Endothelial cell of umbilical vein (primary cell): ENCODE measurements at regions of chr2 and their contacts with region 1.

Region 1: GRCh38 chr2:109613922-109614714 is at the starts of genes SEPTIN10 and SOWAHC:
- DNase-seq: peak; percentile 99
- H3K4me3 ChIP-seq: peak within 1 kb of the TSS; percentile 81 to 100 (median 97)
- H3K27ac ChIP-seq: peak within 1 kb of the TSS; percentile 92
- H3K4me1 ChIP-seq: peaks cover 39% of the 10 kb centered on the region
- H3K27me3 ChIP-seq: no peaks in the 10 kb centered on the region
- CTCF ChIP-seq: no peak
- POLR2A ChIP-seq: peak; percentile 84
- total RNA-seq, gene SEPTIN10: 105 and 121 TPM in 2 replicates
- total RNA-seq, gene SOWAHC: 3.6 and 4.1 TPM in 2 replicates

Region 2: DNA sequence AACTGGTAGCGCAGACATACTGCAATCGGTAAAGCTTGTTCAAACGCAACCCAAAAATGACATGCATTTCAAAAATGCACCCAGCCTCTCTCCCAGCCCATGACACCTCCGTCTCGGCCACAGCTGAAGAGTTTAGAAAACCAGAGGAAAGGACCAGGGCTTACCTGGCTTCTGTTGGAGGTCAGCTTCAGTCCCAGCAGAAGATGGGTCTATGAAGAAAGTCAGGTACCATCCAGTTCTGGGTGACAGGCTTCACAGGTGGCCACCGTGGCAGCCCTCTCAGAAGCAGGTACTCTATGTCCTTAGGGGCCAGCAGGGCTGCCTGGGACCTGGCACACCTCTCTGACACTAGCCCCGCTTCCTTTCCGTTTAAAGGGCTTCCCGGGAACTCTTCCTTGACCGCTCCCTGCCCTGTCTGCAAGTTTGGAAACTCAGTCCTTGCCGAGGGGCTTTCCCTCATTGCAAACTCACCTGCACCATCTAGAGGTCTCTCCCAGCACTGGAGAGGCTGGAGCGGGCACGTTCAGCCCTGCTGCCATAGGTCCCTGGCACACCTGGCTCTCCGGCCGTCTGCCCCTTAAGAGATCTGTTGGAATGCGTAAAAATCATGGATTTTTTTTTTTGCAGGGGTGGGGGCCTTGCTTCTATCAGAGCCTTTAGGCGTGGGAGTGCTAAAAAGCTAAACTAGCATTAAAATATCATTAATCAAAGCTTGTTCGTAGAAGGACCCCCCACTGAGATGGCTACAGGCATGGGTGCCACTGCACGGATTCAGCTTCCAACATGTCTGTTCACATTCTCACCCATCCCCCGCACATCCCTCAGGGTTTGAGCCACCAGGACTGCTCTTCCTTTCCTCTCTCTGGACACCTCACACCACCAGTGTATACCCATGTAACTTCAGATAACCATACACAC is 625.1 kb before region 1 on chr2 and contains the start of gene EDAR:
- CTCF ChIA-PET with region 1: no interaction called
- POLR2A ChIA-PET with region 1: no interaction called
- dilution Hi-C with region 1: no loop called
- intact Hi-C with region 1: no loop called
- DNase-seq: peak; percentile 18
- H3K4me3 ChIP-seq: no peak within 1 kb of the TSS
- H3K27ac ChIP-seq: no peak within 1 kb of the TSS
- H3K4me1 ChIP-seq: no peaks in the 10 kb centered on the region
- H3K27me3 ChIP-seq: peaks cover 8 to 13% of the 10 kb centered on the region in 2 experiments
- CTCF ChIP-seq: peak in 1 of 2 donors; percentile 51
- POLR2A ChIP-seq: no peak
- total RNA-seq, gene EDAR: not detected in 2 replicates

Region 3: DNA sequence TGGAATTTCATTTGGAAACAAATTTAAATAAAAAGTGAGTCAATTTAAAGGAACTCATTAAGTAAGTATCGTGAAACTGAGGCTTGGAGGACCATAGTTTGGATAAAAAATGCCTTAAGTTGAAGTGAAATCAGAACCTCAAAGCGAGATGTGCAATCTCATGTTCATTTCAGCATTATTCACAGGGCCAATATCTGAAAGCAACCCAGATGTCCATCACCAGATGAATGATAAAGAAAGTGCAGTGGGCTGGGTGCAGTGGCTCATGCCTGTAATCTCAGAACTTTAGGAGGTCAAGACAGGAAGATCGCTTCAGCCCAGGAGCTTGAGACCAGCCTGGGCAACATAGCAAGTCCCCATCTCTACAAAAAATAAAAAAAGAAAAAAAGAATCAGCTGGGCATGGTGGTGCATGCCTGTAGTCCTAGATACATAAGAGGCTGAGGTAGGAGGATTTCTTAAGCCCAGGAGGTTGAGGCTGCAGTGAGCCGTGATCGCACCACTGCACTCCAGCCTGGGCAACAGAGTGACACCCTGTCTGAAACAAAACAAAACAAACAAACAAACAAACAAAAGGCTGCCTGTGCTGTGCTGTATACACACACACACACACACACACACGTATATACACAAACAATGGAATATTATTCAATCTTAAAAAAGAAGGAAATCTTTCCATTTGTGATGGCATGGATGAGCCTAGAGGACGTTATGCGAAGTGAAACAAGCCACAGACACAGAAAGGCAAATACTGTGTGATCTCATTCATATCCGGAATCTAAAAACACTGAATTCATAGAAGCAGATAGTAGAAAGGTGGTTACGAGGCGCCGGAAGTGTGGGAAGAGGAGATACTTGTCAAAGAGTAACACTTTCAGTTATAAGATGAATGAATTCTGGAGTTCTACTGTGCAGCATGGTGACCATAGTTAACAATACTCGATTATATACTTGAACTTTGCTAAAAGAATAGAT is 470.6 kb before region 1 on chr2:
- CTCF ChIA-PET with region 1: no interaction called
- POLR2A ChIA-PET with region 1: no interaction called
- dilution Hi-C with region 1: no loop called
- intact Hi-C with region 1: no loop called
- DNase-seq: no peak
- H3K4me3 ChIP-seq: no peak overlapping the region
- H3K27ac ChIP-seq: no peak overlapping the region
- H3K4me1 ChIP-seq: peaks cover 15% of the 10 kb centered on the region
- H3K27me3 ChIP-seq: no peaks in the 10 kb centered on the region
- CTCF ChIP-seq: no peak
- POLR2A ChIP-seq: no peak

Region 4: GRCh38 chr2:109558076-109558882 is 55.8 kb before region 1 on chr2:
- CTCF ChIA-PET with region 1: interaction called, 6 read pairs
- POLR2A ChIA-PET with region 1: no interaction called
- dilution Hi-C with region 1: no loop called
- intact Hi-C with region 1: loop called (anchors 1 kb)
- DNase-seq: peak; percentile 96
- H3K4me3 ChIP-seq: no peak overlapping the region
- H3K27ac ChIP-seq: peak overlapping the region; percentile 96
- H3K4me1 ChIP-seq: peaks cover 32% of the 10 kb centered on the region
- H3K27me3 ChIP-seq: no peaks in the 10 kb centered on the region
- CTCF ChIP-seq: no peak
- POLR2A ChIP-seq: peak; percentile 44

Region 5: DNA sequence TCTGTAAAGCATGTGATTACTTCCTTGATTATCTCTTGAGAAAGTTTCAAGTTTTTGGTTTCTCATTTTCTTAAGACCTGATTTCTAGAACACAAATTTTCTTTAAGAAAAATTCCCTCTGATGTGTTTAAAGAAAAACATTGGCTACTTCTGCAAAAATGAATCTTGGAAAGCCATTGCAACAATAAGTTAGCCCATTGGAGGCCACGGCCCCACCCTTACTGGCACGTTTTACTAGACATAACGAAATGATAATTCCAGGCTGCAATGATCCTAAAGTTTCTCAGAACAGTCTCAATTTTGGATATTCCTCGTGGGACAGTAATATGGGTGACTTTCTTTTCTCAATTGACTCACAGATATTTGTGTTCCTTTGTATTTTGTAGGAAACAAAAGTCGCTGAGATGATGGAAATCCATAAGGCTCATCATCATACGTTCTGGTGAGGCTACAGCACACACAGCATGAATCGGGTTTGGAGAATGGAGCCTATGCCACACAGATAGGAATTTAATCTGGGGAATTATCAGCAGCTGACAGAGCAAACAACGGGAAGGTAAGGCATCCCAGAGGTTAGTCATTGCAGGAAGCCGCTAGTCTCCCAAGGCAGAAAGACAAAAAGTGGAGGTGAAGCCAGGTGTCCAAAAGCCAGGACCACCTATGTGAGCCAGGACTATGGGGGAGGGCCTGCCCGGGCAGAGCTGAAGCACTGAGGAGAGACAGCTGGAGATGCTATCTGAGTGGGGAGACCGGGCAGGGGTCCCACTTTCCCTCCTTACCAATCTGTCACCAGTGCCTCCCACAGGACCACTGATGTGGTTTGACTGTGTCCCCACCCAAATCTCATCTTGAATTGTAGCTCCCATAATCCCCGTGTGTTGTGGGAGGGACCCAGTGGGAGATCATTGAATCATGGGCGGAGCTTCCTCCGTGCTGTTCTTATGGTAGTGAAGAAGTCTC is 35.9 kb after region 1 on chr2:
- CTCF ChIA-PET with region 1: no interaction called
- POLR2A ChIA-PET with region 1: no interaction called
- dilution Hi-C with region 1: no loop called
- intact Hi-C with region 1: no loop called
- DNase-seq: no peak
- H3K4me3 ChIP-seq: no peak overlapping the region
- H3K27ac ChIP-seq: no peak overlapping the region
- H3K4me1 ChIP-seq: no peaks in the 10 kb centered on the region
- H3K27me3 ChIP-seq: peaks cover 0 to 5% of the 10 kb centered on the region in 2 experiments
- CTCF ChIP-seq: no peak
- POLR2A ChIP-seq: no peak